CD14-positive monocyte (primary cell): ENCODE measurements at regions of chr12 and their contacts with region 1.

Region 1: DNA sequence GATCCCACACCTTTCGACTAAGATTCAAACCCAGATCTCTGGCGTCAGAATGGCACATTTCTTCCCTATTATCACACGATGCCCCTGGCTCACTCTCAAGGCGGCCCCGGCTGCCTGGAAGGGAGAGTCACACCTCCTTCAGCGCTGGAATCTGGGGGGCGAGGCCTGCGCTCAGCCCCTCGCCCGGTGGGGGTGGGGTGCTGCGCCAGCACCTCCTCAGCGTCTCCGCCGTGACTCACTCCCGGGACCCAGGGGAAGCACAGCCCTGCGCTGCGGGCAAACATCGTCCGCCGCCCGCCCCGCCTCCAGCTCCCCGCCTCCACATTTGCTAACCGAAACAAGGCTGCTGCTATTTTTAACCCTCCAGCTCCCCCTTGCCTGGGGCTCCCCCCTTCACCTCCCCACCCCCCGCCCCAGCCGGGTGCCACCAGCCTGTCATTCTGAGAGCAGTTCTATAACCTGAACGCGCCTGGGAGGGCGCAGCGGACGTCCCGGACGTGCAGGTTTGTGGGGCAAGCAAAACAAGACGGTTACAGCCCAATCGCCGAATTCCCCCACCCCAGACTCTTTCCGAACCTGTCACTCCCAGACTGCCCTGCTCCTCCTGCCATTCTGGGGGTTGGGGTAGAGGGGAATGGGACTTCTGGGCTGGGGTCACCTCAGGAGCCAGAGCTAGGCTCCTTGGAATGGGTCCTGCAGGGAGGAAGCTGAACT is 6.7 kb downstream of the HDAC7 start:
- DNase-seq: peak; percentile 77 to 88 (median 87)
- H3K4me3 ChIP-seq: peak overlapping the region; percentile 31 to 80 (median 53)
- H3K4me3 Mint-ChIP-seq: peak overlapping the region; percentile 85 to 92
- H3K27ac ChIP-seq: peak overlapping the region; percentile 98 to 99
- H3K27ac Mint-ChIP-seq: peak overlapping the region; percentile 94 to 100 (median 99)
- H3K4me1 ChIP-seq: peaks cover 98 to 99% of the 10 kb centered on the region in 2 donors
- H3K4me1 Mint-ChIP-seq: peaks cover 91% of the 10 kb centered on the region
- H3K27me3 ChIP-seq: no peaks in the 10 kb centered on the region
- H3K27me3 Mint-ChIP-seq: peaks cover 0 to 3% (median 0%) of the 10 kb centered on the region in 3 donors
- CTCF ChIP-seq: no peak

Region 2: DNA sequence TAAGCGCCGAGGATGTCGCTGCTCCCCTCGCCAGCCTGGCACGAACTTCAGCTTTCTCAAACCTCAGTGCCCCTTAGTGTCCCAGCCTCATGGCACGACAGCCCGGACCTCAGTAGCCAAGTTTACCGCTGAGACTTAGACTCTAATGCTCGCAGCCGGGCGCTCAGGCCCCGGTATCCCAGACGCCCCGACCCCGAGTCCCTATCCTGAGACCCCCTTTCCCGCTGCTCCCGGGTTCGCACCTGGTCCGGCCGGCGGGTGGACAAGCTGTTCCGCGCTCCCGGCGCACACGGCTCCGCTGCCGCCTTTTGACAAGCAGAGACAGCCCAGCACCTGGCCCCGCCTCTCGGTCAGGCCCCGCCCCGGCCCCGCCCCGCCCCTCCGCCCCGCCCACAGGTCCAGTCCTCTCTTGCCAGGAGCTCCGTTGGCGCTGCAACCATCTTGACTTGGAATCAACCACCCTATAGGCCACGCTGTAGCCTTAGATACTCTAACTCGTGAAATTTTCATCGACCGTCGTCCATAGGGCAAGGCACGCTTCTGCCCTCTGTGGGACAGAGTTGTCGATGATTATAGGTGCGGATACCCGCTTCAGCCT is 91.9 kb after region 1 on chr12 and contains the start of gene VDR:
- intact Hi-C with region 1: loop called in 1 of 2 experiments (anchors 10 kb)
- DNase-seq: peak; percentile 80 to 88 (median 86)
- H3K4me3 ChIP-seq: peak within 1 kb of the TSS; percentile 68 to 84 (median 81)
- H3K4me3 Mint-ChIP-seq: peak within 1 kb of the TSS; percentile 89 to 96
- H3K27ac ChIP-seq: peak within 1 kb of the TSS; percentile 90 to 96
- H3K27ac Mint-ChIP-seq: peak within 1 kb of the TSS; percentile 91 to 96 (median 94)
- H3K4me1 ChIP-seq: peaks cover 52 to 54% of the 10 kb centered on the region in 2 donors
- H3K4me1 Mint-ChIP-seq: peaks cover 51% of the 10 kb centered on the region
- H3K27me3 ChIP-seq: peaks cover 24 to 25% of the 10 kb centered on the region in 2 donors
- H3K27me3 Mint-ChIP-seq: peaks cover 23 to 34% (median 32%) of the 10 kb centered on the region in 3 donors
- CTCF ChIP-seq: peak; percentile 27
- polyA plus RNA-seq, gene VDR: 6.0 to 14.8 (median 12.8) TPM

Region 3: DNA sequence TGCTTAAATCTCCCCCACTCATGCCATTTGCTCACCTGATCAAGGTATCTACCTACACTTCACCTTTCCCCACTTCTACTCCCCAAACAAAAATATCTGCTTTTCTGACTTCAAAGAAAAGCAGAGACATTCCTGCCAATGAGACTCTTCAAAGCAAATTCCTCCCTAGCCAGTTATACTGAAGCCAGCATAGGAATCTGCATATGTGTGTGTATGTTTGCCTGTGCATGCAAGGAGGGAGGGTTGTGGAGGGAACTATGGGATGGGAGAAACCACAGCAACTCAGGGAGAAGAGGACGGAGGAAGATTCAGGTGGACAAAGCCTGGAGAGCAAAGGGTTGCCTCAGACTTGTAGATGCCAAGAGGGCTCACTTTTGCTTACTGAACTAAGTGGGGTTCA is 118.2 kb after region 1 on chr12:
- intact Hi-C with region 1: no loop called
- DNase-seq: no peak
- H3K4me3 ChIP-seq: no peak overlapping the region
- H3K4me3 Mint-ChIP-seq: no peak overlapping the region
- H3K27ac ChIP-seq: no peak overlapping the region
- H3K27ac Mint-ChIP-seq: no peak overlapping the region
- H3K4me1 ChIP-seq: no peaks in the 10 kb centered on the region
- H3K4me1 Mint-ChIP-seq: no peaks in the 10 kb centered on the region
- H3K27me3 ChIP-seq: no peaks in the 10 kb centered on the region
- H3K27me3 Mint-ChIP-seq: peaks cover 2 to 12% (median 7%) of the 10 kb centered on the region in 3 donors
- CTCF ChIP-seq: no peak